Esophagus muscularis mucosa (tissue), 4 donors: ENCODE measurements at regions of chr20 and their contacts with region 1.

Region 1: GRCh38 chr20:5100684-5101347 is 18.9 kb downstream of the PCNA start:
- DNase-seq: no peak
- H3K4me3 ChIP-seq: no peak overlapping the region
- H3K27ac ChIP-seq: peak overlapping the region in 1 of 4 donors; percentile 43
- H3K4me1 ChIP-seq: peaks cover 0 to 11% (median 0%) of the 10 kb centered on the region in 4 donors
- H3K27me3 ChIP-seq: no peaks in the 10 kb centered on the region
- CTCF ChIP-seq: peak; percentile 83 to 89 (median 87)
- EP300 ChIP-seq: no peak
- POLR2A ChIP-seq: no peak

Region 2: GRCh38 chr20:4850960-4851359 is 249.9 kb before region 1 on chr20:
- intact Hi-C with region 1: no loop called
- DNase-seq: no peak
- H3K4me3 ChIP-seq: no peak overlapping the region
- H3K27ac ChIP-seq: no peak overlapping the region
- H3K4me1 ChIP-seq: no peaks in the 10 kb centered on the region
- H3K27me3 ChIP-seq: no peaks in the 10 kb centered on the region
- CTCF ChIP-seq: no peak
- EP300 ChIP-seq: no peak
- POLR2A ChIP-seq: no peak

Region 3: GRCh38 chr20:4961746-4962145 is 139.1 kb before region 1 on chr20:
- intact Hi-C with region 1: loop called (anchors 5 kb)
- DNase-seq: no peak
- H3K4me3 ChIP-seq: no peak overlapping the region
- H3K27ac ChIP-seq: no peak overlapping the region
- H3K4me1 ChIP-seq: peaks cover under 1 to 5% (median 2%) of the 10 kb centered on the region in 4 donors
- H3K27me3 ChIP-seq: no peaks in the 10 kb centered on the region
- CTCF ChIP-seq: no peak
- EP300 ChIP-seq: no peak
- POLR2A ChIP-seq: no peak